PC-9 (cell line): ENCODE measurements at regions of chr10 and their contacts with region 1.

Region 1: DNA sequence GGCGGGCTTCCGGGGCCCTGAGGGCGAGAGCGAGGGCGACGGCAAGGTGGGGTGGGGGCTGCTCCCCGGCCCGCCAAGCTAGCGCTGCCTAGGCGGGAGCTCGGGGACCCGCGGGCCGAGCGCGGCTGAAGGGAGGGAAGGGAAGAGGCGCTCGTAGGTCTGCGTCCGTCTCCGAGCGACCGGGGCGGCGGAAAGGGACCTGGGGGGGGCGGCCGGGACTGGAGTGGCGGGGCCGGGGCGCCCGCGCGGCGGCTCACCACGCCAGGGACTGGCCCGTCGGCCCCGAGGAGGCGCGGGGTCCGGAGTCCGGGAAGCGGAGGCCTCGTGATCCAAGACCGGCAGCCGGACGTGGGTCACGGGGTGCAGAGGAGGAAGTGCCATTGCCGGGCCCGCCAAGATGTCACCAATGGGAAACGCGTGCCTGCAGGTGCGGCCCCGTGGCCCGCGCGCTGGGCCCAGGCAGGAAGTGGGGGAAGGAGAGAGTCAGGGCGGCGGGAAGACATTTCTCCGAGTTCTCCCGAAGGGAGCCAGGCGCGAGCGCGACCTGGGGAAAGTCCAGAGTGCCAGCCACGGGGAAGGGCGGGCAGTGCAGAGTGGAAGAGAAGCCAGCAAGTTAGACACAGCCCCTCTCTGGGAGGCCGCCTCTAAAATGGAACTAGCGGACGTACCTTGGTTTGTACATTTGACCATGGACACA is 11.9 kb downstream of the HNRNPF start:
- DNase-seq: peak; percentile 86 to 96
- H3K4me3 ChIP-seq: peak overlapping the region; percentile 63
- H3K27ac ChIP-seq: peak overlapping the region; percentile 80
- H3K4me1 ChIP-seq: peaks cover 63% of the 10 kb centered on the region
- H3K27me3 ChIP-seq: no peaks in the 10 kb centered on the region
- CTCF ChIP-seq: no peak

Region 2: GRCh38 chr10:43204943-43205671 is 192.0 kb before region 1 on chr10:
- CTCF ChIA-PET with region 1: no interaction called
- POLR2A ChIA-PET with region 1: no interaction called
- intact Hi-C with region 1: loop called (anchors 5 kb)
- DNase-seq: peak; percentile 50 to 66
- H3K4me3 ChIP-seq: no peak overlapping the region
- H3K27ac ChIP-seq: no peak overlapping the region
- H3K4me1 ChIP-seq: no peaks in the 10 kb centered on the region
- H3K27me3 ChIP-seq: no peaks in the 10 kb centered on the region
- CTCF ChIP-seq: peak; percentile 91

Region 3: GRCh38 chr10:43284341-43284910 is 112.7 kb before region 1 on chr10:
- CTCF ChIA-PET with region 1: no interaction called
- POLR2A ChIA-PET with region 1: no interaction called
- intact Hi-C with region 1: no loop called
- DNase-seq: peak in 1 of 2 experiments; percentile 46
- H3K4me3 ChIP-seq: no peak overlapping the region
- H3K27ac ChIP-seq: no peak overlapping the region
- H3K4me1 ChIP-seq: peaks cover 22% of the 10 kb centered on the region
- H3K27me3 ChIP-seq: peaks cover 8% of the 10 kb centered on the region; the same call in 1 of the 2 replicates
- CTCF ChIP-seq: no peak

Region 4: GRCh38 chr10:43361986-43362839 is 34.9 kb before region 1 on chr10:
- CTCF ChIA-PET with region 1: no interaction called
- POLR2A ChIA-PET with region 1: no interaction called
- intact Hi-C with region 1: no loop called
- DNase-seq: peak; percentile 95 to 100
- H3K4me3 ChIP-seq: peak overlapping the region; percentile 70
- H3K27ac ChIP-seq: peak overlapping the region; percentile 44
- H3K4me1 ChIP-seq: peaks cover 10% of the 10 kb centered on the region; the same call in 1 of the 2 replicates
- H3K27me3 ChIP-seq: no peaks in the 10 kb centered on the region
- CTCF ChIP-seq: peak; percentile 60; the same call in 1 of the 2 replicates

Region 5: GRCh38 chr10:43380610-43381222 is 16.4 kb before region 1 on chr10:
- CTCF ChIA-PET with region 1: interaction called, 14 read pairs
- POLR2A ChIA-PET with region 1: no interaction called
- intact Hi-C with region 1: no loop called
- DNase-seq: peak in 1 of 2 experiments; percentile 39
- H3K4me3 ChIP-seq: no peak overlapping the region
- H3K27ac ChIP-seq: peak overlapping the region; percentile 78
- H3K4me1 ChIP-seq: peaks cover 5% of the 10 kb centered on the region
- H3K27me3 ChIP-seq: no peaks in the 10 kb centered on the region
- CTCF ChIP-seq: peak; percentile 46; the same call in 1 of the 2 replicates

Region 6: DNA sequence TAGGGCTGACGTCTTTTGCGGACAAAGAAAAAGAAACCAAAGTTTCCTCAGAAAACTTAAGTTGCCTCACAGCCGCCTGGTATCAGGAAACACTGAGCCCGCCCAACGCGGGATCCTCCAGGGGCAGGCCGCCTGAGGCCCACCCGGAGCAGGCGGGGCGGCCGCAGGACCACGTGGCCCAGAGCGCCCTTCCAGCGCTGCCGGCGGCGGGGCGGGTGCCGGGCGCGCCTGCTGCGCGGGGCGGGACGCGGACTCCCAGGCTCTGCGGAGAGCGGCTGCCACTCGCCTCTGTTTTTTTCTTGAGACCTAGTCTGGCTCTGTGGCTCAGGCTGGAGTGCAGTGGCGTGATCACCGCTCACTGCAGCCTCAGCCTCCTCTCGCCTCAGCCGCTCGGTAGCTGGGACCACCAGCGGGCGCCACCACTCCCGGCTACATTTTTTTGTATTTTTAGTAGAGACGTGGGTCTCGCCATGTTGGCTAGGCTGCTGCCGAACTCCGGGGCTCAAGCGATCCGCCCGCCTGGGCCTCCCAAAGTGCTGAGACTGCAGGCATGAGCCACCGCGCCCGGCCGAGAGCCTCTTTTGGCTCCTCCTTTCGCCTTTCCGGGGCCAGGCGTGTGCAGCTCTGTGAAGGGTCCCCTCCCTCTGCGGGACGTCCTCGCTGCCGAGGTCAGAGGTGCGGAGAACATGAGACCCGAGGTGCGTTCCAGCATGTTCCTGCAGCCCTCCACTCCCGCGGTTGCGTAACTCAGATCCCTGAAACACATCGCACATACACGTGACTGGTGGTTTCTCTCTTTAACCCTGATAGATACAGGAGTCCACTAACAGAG is 23.5 kb after region 1 on chr10:
- CTCF ChIA-PET with region 1: no interaction called
- POLR2A ChIA-PET with region 1: interaction called, 3 read pairs
- intact Hi-C with region 1: loop called (anchors 2 kb)
- DNase-seq: peak; percentile 65 to 91
- H3K4me3 ChIP-seq: peak overlapping the region; percentile 80
- H3K27ac ChIP-seq: peak overlapping the region; percentile 77
- H3K4me1 ChIP-seq: peaks cover 14% of the 10 kb centered on the region
- H3K27me3 ChIP-seq: no peaks in the 10 kb centered on the region
- CTCF ChIP-seq: no peak

Region 7: GRCh38 chr10:43436400-43437140 is 39.5 kb after region 1 on chr10 and contains the start of gene ZNF487:
- CTCF ChIA-PET with region 1: no interaction called
- POLR2A ChIA-PET with region 1: interaction called, 3 read pairs
- intact Hi-C with region 1: loop called (anchors 2 kb)
- DNase-seq: peak; percentile 83 to 97
- H3K4me3 ChIP-seq: peak within 1 kb of the TSS; percentile 98
- H3K27ac ChIP-seq: peak within 1 kb of the TSS; percentile 88
- H3K4me1 ChIP-seq: 0 out of 2 replicates have a peak, but pooled peaks cover 4% of the 10 kb centered on the region
- H3K27me3 ChIP-seq: no peaks in the 10 kb centered on the region
- CTCF ChIP-seq: no peak
- total RNA-seq, gene ZNF487: 11.8 and 14.5 TPM in 2 replicates